A673 (cell line): ENCODE measurements at regions of chr6 and their contacts with region 1.

Region 1: DNA sequence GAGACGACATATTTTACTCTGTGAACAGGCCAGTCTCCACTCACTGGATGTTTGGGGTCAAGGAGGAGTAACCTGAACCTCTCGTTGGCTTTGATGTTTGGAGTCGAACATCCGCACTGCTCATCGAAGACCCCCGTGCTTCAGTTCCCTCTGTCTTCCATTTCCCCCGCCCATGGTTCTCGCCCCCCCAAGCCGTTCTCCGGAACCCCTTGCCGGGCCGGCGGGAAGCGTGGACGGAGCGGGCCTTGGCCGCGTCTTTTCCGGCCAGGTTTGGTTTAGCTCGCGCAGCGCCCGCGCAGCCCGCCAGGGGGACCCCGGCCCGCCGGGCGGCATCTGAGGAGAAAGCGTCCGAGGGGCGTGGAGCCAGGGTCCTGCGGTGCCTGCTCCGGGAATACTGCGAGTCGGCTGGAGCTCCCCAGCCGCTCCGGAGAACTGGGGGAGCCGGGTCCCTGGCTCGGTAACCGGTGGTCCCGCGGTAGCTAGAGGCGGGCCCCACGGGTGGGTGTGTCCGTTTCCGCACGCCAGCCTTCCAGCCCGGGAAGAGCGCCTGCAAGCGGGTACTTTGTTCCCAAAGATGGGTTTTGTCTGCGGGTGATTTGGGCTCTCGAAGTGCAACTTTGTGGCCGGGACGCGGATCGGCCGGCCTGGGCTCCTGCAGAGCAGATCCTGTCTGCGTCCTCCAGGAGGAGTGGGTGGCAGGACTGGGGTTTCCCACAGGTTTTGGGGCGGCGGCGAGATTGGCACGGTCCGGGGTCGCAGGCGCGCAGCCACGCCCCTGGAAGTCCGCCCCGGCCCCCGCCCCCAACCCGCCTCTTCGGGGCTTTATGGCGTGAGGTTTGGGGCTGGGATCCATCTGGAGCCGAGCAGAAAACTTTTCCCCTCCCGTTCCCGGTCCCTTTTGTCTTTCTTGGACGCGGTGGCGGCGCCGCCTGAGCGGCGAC is at the start of gene TMEM200A:
- DNase-seq: peak; percentile 76
- H3K4me3 ChIP-seq: peak within 1 kb of the TSS; percentile 66
- H3K27ac ChIP-seq: no peak within 1 kb of the TSS
- H3K4me1 ChIP-seq: peaks cover 5% of the 10 kb centered on the region
- H3K27me3 ChIP-seq: peaks cover 38% of the 10 kb centered on the region
- CTCF ChIP-seq: peak; percentile 89
- total RNA-seq, gene TMEM200A: 2.0 and 2.3 TPM in 2 replicates

Region 2: DNA sequence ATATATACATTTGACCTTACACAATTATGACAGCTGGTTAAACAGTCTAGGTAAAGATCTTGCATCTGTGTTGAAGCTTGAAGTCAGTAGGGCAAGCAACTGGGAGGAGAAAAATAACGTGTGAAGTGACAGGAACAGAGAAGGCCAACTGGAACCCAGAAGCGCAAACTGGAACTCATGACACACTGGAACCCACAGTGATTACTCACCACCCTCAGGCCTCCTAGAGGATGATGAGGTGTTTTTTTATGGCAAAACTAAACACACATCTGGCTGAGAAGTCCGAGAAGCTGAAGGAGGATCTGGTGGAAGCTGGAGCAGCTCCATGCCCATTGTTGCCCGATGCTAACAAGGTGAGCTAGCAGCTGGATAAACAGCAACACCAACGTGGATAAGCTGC is 108.5 kb after region 1 on chr6:
- CTCF ChIA-PET with region 1: interaction called, 10 read pairs
- POLR2A ChIA-PET with region 1: no interaction called
- intact Hi-C with region 1: no loop called
- DNase-seq: no peak
- H3K4me3 ChIP-seq: no peak overlapping the region
- H3K27ac ChIP-seq: no peak overlapping the region
- H3K4me1 ChIP-seq: no peaks in the 10 kb centered on the region
- H3K27me3 ChIP-seq: no peaks in the 10 kb centered on the region
- CTCF ChIP-seq: no peak

Region 3: DNA sequence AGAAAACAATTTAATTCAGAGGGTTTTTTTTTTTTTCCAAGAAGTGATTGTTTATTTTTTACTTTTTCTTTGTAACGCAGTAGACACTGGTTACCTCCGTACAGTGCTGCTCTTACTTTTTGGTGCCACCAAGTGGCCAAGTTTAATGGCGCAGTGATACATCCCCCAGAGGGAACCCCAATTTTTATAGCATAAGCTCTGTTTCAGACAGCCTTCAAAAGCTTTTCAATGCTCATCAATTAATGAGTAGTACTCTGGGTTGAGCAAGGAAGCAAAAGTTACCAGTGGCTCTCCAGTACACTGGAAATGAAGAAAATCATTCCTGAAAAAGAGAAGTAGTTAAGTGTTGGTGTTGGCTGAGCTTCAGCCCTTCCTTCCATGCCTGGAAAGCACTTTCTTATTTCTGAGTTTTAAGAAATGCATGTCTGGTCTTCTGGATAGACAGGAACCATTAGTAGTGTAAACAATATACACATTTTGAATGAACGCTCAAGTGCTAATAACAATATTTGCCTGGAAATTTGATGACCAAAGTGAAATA is 332.6 kb after region 1 on chr6:
- CTCF ChIA-PET with region 1: interaction called, 8 read pairs
- POLR2A ChIA-PET with region 1: no interaction called
- intact Hi-C with region 1: loop called (anchors 1 kb)
- DNase-seq: peak; percentile 76
- H3K4me3 ChIP-seq: no peak overlapping the region
- H3K27ac ChIP-seq: no peak overlapping the region
- H3K4me1 ChIP-seq: no peaks in the 10 kb centered on the region
- H3K27me3 ChIP-seq: no peaks in the 10 kb centered on the region
- CTCF ChIP-seq: peak; percentile 95

Region 4: DNA sequence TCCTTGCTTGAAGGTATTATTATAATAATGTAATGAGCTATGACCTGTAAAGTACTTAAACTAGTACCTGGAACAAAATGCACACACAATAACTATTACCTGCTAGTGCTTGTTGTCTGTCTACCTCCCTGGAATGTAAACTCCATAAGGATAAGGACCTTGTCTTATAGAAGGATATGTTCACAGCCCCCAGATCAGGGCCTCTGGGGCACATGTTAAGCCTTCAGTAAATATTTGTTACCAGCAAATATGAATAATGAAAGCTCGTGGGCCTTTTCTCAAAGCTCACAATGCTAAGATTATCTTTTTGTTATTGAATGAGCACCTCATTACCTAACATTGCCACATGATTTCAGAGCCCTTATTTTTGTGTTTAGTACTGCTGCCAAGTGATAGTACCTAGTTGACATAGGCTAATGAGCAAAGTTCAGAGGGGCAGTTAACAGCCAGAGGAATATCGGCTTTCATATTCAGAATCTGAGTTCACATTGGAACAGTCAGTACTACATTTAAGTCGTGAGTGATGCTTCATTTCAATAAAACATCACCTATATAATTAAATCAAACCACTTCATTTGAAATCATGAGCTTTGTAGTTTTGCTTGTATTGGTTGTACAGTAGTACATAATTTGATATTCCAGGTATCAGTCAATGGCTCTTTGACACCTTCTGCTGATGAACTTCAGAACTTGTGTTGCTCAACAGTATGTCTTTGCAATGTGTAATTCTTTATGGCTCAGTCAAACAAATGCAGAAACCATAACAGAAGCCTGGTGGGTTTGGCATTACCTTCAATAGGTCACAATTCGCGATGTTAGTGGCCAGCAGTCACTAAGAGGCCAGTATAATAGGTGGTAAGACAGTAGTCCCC is 450.0 kb after region 1 on chr6:
- CTCF ChIA-PET with region 1: no interaction called
- POLR2A ChIA-PET with region 1: no interaction called
- intact Hi-C with region 1: no loop called
- DNase-seq: no peak
- H3K4me3 ChIP-seq: no peak overlapping the region
- H3K27ac ChIP-seq: no peak overlapping the region
- H3K4me1 ChIP-seq: no peaks in the 10 kb centered on the region
- H3K27me3 ChIP-seq: no peaks in the 10 kb centered on the region
- CTCF ChIP-seq: no peak